ENCODE measurements at regions of chr1 and their contacts with region 1.

Region 1: GRCh38 chr1:150995896-150996295 is 10.8 kb downstream of the MINDY1 start:
- DNase-seq: no peak

Region 2: GRCh38 chr1:150979092-150980056 is 16.5 kb before region 1 on chr1:
- CTCF ChIA-PET with region 1: interaction called, 70 read pairs
- POLR2A ChIA-PET with region 1: no interaction called
- DNase-seq: peak; percentile 91

Region 3: DNA sequence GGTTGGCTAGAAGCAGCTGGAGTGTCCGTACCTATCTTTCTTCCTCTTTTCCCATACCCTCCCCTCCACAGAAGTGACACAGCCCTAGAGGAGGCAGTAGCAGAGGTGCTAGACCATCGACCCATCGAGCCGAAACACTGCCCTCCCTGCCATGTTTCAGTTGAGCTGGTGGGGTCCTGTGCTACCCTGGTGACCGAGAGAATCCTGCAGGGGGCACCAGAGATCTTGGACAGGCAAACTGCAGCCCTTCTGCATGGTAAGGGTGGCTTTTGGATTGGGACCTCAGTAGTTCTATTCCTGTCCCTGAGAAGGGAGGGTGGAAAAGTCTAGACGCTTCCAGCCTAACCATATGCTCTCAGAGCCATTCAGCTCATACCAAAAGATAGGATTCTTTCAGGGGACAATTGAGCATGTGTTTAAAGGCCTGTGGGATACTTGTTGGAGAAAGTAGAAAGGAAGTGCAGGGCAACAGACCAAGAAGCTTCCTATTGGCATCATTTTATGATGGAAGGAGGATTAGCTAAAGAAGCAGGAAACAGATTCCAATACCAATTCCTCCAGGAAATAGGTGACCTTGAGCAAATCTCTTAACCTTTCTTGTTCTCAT is 28.7 kb after region 1 on chr1:
- CTCF ChIA-PET with region 1: no interaction called
- POLR2A ChIA-PET with region 1: no interaction called
- DNase-seq: peak; percentile 84